CD8-positive, alpha-beta memory T cell (primary cell): ENCODE measurements at regions of chr14 and their contacts with region 1.

Region 1: GRCh38 chr14:39422243-39422642 is 10.0 kb downstream of the FBXO33 start:
- DNase-seq: no peak
- H3K4me3 ChIP-seq: no peak overlapping the region
- H3K4me3 Mint-ChIP-seq: peak overlapping the region in 3 of 7 donors; percentile 1 to 32 (median 5)
- H3K27ac ChIP-seq: no peak overlapping the region
- H3K27ac Mint-ChIP-seq: peak overlapping the region in 3 of 8 donors; percentile 2 to 34 (median 21)
- H3K4me1 ChIP-seq: peaks cover 31% of the 10 kb centered on the region
- H3K4me1 Mint-ChIP-seq: peaks cover 63 to 81% (median 78%) of the 10 kb centered on the region in 3 donors
- H3K27me3 ChIP-seq: no peaks in the 10 kb centered on the region
- H3K27me3 Mint-ChIP-seq: no peaks in the 10 kb centered on the region

Region 2: DNA sequence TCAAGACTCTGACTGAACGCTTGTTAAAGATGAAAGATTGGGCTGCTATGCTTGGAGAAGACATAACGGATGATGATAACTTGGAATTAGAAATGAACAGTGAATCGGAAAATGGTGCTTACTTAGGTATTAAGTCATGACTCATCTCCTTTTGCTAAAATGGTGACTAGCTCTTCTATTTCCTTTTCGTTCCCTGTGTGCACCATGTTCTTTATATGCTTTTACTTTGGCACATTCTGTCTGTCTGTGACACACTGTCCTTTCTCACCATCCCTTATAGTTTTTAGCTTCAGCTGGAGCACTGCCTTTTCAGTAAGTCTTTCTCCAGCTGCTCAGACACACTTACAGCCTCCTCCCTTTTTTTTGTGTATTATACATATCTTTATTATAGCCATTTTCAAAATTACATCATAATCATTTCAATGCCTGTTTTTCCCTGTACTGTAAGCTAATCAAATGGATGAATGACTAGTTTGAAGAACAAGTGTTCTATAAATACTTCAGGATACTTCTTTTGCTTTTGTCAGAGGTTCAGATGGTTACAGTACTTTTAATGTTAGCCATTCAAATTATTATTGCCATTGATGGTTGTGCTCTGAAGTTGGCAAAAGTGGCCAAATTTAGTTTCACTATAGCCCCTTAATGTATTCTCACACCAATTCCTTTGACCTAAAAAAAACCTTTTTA is 120.0 kb before region 1 on chr14:
- CTCF ChIA-PET with region 1: no interaction called
- POLR2A ChIA-PET with region 1: interaction called, 10 read pairs
- DNase-seq: no peak
- H3K4me3 ChIP-seq: no peak overlapping the region
- H3K4me3 Mint-ChIP-seq: no peak overlapping the region
- H3K27ac ChIP-seq: no peak overlapping the region
- H3K27ac Mint-ChIP-seq: peak overlapping the region in 3 of 8 donors; percentile 38 to 79 (median 43)
- H3K4me1 ChIP-seq: no peaks in the 10 kb centered on the region
- H3K4me1 Mint-ChIP-seq: peaks cover 0 to 8% (median 6%) of the 10 kb centered on the region in 3 donors
- H3K27me3 ChIP-seq: no peaks in the 10 kb centered on the region
- H3K27me3 Mint-ChIP-seq: no peaks in the 10 kb centered on the region